A673 (cell line): ENCODE measurements at regions of chr9 and their contacts with region 1.

Region 1: DNA sequence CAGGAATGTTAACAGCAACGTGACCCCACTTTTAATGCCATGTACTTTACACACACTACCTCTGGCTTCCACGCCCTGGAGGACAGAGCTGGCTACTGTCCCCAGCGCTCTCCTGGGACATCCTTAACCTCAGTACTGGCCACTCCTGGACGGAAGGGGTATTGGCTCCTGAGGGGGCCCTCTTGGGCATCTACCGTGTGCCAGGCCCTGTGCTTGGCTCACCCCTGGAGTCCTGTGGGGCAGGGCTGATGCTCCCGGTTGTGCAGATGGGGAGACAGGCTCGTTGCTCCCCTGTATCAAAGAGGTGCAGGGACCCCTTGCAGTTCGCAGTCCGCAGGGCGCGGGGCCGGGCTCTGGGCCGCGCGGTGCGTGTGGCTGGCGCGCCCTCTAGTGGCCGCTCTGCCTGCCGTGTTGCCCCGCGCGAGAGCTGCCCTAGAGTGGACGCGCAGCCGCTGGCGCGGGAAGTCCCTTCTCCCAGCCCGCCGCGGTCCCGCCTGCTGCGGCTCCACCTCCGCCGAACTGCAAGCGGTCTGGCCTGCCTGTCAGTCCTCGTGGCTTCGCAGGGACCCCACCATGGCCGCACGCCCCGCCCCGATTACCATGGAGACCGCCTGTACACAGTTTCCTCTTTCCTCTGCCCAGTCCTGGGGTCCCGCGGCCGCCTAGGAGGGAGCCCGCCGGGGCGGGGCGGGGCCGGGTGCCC is at the start of gene WDR38:
- DNase-seq: peak; percentile 85
- H3K4me3 ChIP-seq: peak within 1 kb of the TSS; percentile 44
- H3K27ac ChIP-seq: no peak within 1 kb of the TSS
- H3K4me1 ChIP-seq: peaks cover 6% of the 10 kb centered on the region
- H3K27me3 ChIP-seq: no peaks in the 10 kb centered on the region
- CTCF ChIP-seq: peak; percentile 93
- total RNA-seq, gene WDR38: not detected in 2 replicates

Region 2: DNA sequence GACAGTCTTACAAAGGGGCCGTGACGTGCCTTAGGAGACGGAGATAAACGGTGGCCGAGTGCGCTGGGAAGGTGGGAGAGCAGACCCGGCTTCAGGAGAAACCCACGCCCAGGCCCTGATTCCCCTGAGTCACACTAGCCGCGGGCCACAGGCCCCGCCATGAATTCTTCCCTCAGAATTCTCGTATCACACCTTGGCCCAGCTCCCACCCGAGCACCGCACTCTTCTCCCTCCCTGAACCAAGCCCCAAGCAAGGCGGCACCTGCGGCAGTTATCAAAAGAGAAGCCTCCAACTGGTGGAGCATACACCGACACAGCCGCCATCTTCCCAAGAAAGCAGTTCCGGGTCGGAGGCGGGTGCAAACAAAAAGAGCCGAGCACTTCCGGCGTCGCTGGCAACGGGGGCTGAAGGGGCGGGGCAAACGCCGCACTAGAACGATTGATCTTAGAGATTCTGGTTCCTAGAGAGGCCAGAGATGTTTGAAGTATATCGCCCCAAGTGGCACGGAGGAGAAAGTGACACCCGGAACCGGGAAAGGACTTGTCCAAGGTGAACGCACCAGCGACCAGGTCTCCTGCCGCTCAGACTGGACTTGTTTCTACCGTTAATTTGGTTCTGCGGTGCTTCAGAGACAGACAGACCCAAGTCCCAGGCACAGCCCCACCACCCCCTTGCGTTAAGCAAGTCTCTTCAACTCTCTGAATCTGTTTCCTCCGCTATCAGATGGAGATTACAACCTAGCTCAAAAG is 437.7 kb before region 1 on chr9 and contains the start of gene PSMB7:
- CTCF ChIA-PET with region 1: no interaction called
- POLR2A ChIA-PET with region 1: no interaction called
- intact Hi-C with region 1: loop called (anchors 10 kb)
- DNase-seq: peak; percentile 98
- H3K4me3 ChIP-seq: peak within 1 kb of the TSS; percentile 74
- H3K27ac ChIP-seq: peak within 1 kb of the TSS; percentile 80
- H3K4me1 ChIP-seq: peaks cover 20% of the 10 kb centered on the region
- H3K27me3 ChIP-seq: no peaks in the 10 kb centered on the region
- CTCF ChIP-seq: peak; percentile 85
- total RNA-seq, gene PSMB7: 355 and 380 TPM in 2 replicates

Region 3: DNA sequence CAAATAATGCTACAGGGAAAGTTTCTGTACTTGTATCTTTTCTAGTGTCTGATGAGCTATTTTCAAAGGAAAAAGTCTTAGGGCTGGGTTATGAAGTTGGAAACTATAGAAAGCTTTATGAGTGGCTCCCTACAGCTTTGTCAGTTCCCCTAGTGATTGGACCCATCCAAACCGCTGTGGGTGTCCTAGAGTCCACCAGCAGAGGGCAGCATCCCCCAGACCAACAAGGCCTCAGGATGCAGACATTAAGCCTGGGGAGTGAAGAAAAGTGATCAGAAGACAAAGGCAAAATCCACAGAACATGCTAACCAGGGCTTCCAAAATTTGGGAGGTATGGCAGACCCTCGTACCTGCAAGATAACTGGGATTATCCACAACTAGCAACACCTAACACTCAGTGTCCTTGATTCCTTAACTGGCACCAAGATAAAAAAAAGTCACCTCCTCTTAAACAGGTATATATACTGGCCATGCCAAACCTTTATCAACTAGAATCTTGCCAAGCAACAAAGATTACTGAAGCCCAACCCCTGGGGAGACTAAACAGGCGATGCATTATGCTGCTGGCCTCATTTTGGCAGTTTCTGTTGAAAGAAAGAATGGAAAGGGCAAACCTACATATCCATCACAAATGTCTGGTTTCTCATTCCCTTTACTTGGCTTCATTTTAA is 235.4 kb before region 1 on chr9:
- CTCF ChIA-PET with region 1: interaction called, 3 read pairs
- POLR2A ChIA-PET with region 1: no interaction called
- intact Hi-C with region 1: loop called (anchors 5 kb)
- DNase-seq: peak; percentile 87
- H3K4me3 ChIP-seq: no peak overlapping the region
- H3K27ac ChIP-seq: no peak overlapping the region
- H3K4me1 ChIP-seq: peaks cover 18% of the 10 kb centered on the region
- H3K27me3 ChIP-seq: no peaks in the 10 kb centered on the region
- CTCF ChIP-seq: peak; percentile 96

Region 4: DNA sequence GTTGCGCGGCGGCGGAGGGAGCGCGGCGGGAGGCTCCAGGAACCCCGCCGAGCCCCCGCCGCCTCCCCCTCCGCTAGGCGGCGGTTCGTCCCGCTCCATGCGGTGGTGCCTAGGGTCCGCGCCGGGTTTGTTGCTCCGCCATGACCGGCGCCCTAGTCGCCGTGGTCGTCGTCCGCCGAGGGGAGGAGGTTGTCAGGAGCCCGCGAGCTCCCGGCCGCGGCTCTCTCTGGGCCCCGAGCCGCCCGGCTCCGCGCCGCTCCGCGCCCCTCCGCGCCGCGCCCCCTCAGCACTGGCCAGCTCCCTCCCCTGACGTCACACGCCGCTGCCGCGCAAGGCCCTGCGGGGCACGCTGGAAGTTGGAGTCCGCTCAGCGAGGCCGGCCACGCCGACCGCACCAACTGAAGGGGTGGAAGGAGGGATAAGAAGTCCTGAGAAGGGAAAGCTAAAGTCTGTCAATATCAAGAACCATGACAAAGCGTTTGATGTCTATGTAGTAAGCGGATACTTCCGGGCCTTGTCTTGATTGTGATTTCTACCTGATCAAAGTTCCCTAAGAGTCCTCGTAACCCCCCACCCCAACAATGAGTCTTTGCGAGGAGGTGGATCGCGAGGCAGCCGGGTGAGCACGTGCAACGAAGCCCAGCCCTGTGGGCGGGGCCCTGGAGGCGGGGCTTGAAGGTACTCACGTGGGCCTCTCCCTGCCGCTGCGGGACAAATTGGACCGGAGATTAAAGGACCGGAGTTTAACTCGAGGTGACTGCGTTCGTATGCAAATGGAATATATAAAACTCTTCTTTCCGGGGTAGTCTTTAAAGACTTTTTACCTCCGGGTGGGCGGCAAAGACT is 81.7 kb before region 1 on chr9 and contains the start of gene NR6A1:
- CTCF ChIA-PET with region 1: interaction called, 58 read pairs
- POLR2A ChIA-PET with region 1: no interaction called
- intact Hi-C with region 1: loop called (anchors 1 kb)
- DNase-seq: peak; percentile 99
- H3K4me3 ChIP-seq: peak within 1 kb of the TSS; percentile 67
- H3K27ac ChIP-seq: peak within 1 kb of the TSS; percentile 94
- H3K4me1 ChIP-seq: peaks cover 29% of the 10 kb centered on the region
- H3K27me3 ChIP-seq: no peaks in the 10 kb centered on the region
- CTCF ChIP-seq: 0 out of 2 replicates have a peak, but pooled peaks have one; percentile 22
- total RNA-seq, gene NR6A1: 5.3 and 6.8 TPM in 2 replicates

Region 5: GRCh38 chr9:124800306-124801259 is 52.4 kb before region 1 on chr9:
- CTCF ChIA-PET with region 1: interaction called, 4 read pairs
- POLR2A ChIA-PET with region 1: interaction called, 15 read pairs
- intact Hi-C with region 1: no loop called
- DNase-seq: peak; percentile 33
- H3K4me3 ChIP-seq: no peak overlapping the region
- H3K27ac ChIP-seq: no peak overlapping the region
- H3K4me1 ChIP-seq: peaks cover 10% of the 10 kb centered on the region
- H3K27me3 ChIP-seq: no peaks in the 10 kb centered on the region
- CTCF ChIP-seq: no peak

Region 6: DNA sequence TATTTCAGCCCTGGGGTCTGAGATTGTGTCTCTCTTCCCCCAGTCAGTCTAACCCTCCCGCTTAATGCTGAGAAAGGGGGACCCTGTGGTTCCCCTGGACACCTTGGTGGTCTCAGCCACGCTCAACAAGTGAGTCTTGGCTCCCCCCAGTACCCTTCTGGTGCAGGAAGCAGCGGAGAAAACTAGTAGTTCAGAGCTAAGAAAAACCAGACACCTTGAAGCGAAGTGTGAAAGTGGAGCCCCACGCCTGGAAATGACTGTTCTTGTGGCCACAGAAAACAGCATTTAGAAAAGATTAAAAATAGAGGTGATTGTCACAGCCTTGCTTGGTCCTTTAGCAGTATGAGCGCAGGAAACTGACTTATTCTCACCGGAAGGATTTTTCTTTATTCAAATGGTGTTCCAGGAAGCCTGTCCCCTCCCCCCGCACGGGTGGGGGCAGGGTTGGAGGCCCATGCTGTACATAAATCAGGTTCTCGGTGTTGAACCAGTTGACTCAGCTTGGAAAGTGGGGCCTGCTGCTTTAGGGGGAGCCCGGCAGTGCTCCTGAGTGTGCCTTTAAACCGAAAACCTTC is 17.1 kb after region 1 on chr9:
- CTCF ChIA-PET with region 1: no interaction called
- POLR2A ChIA-PET with region 1: no interaction called
- intact Hi-C with region 1: no loop called
- DNase-seq: peak; percentile 67
- H3K4me3 ChIP-seq: peak overlapping the region; percentile 93
- H3K27ac ChIP-seq: peak overlapping the region; percentile 99
- H3K4me1 ChIP-seq: peaks cover 27% of the 10 kb centered on the region
- H3K27me3 ChIP-seq: no peaks in the 10 kb centered on the region
- CTCF ChIP-seq: no peak

Region 7: DNA sequence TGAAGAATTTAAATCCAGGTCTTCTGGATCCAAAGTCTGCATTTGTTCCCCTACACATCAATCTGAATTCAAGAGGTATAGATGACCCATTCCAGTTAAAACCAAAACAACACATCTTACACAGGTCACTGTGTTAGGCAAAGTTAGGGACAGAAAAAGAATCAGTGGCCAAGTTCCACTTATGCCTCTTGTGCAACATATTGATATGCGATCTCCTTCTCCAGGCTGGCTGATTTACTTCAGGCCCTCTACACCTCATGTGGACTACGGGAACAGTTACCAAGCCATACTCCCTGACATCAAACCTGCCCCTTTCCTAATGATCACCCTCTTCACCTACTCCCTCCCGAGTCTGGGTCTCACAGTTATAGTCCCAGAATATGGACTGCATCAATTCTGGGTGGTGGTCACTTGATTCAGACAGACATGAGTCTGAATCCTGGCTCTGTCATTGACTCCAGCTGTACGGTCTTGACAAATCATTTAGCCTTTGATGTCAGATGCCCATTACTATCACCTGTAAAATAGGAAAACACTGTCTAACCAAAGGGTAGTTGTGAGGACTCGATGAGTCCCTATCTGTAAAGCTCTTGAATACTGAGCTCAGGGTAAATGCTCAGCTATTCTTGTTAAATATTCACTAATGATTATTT is 61.9 kb after region 1 on chr9:
- CTCF ChIA-PET with region 1: no interaction called
- POLR2A ChIA-PET with region 1: no interaction called
- intact Hi-C with region 1: no loop called
- DNase-seq: no peak
- H3K4me3 ChIP-seq: no peak overlapping the region
- H3K27ac ChIP-seq: no peak overlapping the region
- H3K4me1 ChIP-seq: no peaks in the 10 kb centered on the region
- H3K27me3 ChIP-seq: no peaks in the 10 kb centered on the region
- CTCF ChIP-seq: no peak

Region 8: DNA sequence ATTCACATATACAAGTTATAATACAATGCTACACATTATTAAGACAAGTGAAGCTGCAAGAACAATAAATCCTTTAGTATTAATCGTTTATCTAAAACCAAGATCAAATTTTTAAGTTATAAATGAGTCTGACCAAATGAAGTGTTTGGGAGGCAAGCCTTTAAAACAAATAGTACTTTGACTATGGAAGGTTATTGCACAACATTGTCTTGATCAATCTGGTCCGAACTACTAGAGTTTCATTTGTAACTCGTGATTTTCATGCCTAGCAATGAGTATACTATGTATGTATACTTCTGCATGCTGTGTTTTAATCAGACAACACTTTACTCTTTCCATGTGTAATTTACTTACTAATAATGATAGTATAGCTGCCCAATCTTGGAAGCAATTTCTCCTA is 175.1 kb after region 1 on chr9:
- CTCF ChIA-PET with region 1: no interaction called
- POLR2A ChIA-PET with region 1: no interaction called
- intact Hi-C with region 1: no loop called
- DNase-seq: no peak
- H3K4me3 ChIP-seq: no peak overlapping the region
- H3K27ac ChIP-seq: no peak overlapping the region
- H3K4me1 ChIP-seq: no peaks in the 10 kb centered on the region
- H3K27me3 ChIP-seq: no peaks in the 10 kb centered on the region
- CTCF ChIP-seq: no peak

Region 9: GRCh38 chr9:125143375-125144090 is 290.6 kb after region 1 on chr9 and contains the start of gene SCAI:
- CTCF ChIA-PET with region 1: no interaction called
- POLR2A ChIA-PET with region 1: no interaction called
- intact Hi-C with region 1: loop called (anchors 10 kb)
- DNase-seq: peak; percentile 100
- H3K4me3 ChIP-seq: peak within 1 kb of the TSS; percentile 64
- H3K27ac ChIP-seq: peak within 1 kb of the TSS; percentile 48
- H3K4me1 ChIP-seq: no peaks in the 10 kb centered on the region
- H3K27me3 ChIP-seq: no peaks in the 10 kb centered on the region
- CTCF ChIP-seq: peak; percentile 99
- total RNA-seq, gene SCAI: 14.1 and 15.1 TPM in 2 replicates

Region 10: DNA sequence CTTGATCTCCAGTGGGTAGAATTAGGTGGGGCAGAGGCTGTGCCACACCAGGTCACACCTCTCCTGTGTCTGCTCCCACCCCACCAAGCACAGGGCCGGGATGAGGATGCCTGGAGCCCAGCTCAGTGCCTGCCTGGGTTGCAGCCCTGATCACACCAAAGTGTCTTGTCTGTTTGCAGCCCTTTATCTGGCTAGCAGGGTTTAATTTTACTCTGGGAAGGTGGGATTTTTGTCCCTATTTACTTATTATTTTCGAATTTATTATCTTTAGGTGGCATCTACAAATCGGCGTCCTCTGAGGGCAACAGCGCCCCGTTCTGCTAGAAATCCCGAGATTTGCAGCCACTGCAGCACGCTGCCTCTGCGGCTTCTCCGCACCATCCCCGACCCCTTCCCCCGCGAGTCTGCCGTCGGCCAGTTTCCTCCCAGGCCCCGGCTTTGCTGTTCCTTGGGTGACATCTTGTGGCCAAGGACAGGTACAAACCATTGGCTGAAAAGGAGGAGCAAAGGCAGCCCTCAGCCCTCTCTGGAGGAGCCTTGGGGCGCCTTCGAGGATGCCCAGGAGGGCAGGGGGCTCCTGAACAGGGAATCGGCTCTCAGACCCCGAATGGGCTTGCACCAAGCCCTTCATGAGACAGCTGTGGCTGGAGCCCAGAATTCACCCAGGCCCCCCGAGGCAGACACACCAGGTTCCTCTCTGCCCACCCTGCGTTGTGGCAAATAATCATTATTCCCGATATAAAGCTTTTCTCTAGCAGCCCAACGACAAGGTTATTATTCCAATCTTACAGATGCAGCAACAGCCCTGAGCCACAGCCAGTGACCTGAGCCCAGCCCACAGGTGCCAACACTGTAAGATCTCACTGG is 521.7 kb after region 1 on chr9:
- CTCF ChIA-PET with region 1: no interaction called
- POLR2A ChIA-PET with region 1: no interaction called
- intact Hi-C with region 1: loop called (anchors 10 kb)
- DNase-seq: peak; percentile 89
- H3K4me3 ChIP-seq: peak overlapping the region; percentile 24
- H3K27ac ChIP-seq: no peak overlapping the region
- H3K4me1 ChIP-seq: peaks cover 10% of the 10 kb centered on the region
- H3K27me3 ChIP-seq: no peaks in the 10 kb centered on the region
- CTCF ChIP-seq: peak; percentile 79